ENCODE measurements at regions of chr1 and their contacts with region 1.

Region 1: DNA sequence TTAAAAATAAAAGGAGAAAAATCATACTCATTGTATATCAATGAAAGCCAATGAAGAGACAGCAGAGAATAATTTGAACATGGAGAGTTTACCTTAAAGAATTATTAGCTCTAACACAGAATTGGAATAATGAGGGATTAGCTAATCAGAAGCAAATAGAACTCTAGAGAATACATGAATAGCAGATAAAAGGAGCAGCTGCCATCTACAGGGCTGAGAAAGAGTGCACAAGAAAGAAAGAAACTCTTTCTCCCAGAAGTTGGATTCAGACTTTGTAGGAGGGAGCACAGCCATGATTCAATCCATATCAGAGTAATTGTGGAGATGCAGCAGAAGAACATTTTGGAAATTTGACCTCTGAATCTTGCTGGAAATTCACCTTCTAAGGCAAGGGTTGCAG is 1171.2 kb downstream of the PLA2G4A start:
- DNase-seq: no peak
- ATAC-seq: no peak
- H3K4me3 ChIP-seq: no peak overlapping the region
- H3K27ac ChIP-seq: no peak overlapping the region
- H3K4me1 ChIP-seq: no peaks in the 10 kb centered on the region
- H3K27me3 ChIP-seq: no peaks in the 10 kb centered on the region
- CTCF ChIP-seq: peak in 4 of 12 donors; percentile 22 to 39 (median 24)
- POLR2A ChIP-seq: no peak

Region 2: DNA sequence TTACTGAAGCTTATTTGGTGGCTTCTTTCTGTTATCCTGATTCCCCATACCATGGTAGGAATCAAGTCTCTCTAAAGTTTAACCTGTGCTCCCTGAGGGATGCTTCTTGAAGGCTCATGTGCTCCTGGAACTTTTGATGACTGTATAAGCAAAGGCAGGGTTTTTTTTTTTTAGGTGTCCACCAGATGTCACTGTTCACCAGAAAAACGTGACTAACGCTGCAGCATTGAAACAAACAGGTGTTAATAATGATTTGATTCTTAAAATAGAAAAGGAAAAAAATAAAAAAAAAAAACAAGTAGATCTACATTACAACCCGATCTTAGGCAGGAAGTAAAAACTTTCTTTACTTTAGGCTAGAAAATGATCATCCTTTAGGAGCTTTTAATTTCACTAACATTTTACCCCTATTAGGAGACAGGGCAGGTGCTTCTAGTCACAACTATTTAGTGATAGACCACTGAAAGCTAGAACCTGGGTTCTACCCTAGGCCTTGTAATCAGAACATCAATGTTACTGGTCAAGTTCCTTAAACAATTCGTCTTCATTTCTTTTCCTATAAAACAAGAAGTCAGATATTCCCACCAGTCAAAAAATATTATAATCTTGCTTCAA is 948.2 kb before region 1 on chr1:
- intact Hi-C with region 1: loop called in 1 of 10 experiments (anchors 5 kb)
- DNase-seq: no peak
- ATAC-seq: no peak
- H3K4me3 ChIP-seq: no peak overlapping the region
- H3K27ac ChIP-seq: no peak overlapping the region
- H3K4me1 ChIP-seq: peaks cover 0 to 5% (median 0%) of the 10 kb centered on the region in 12 donors
- H3K27me3 ChIP-seq: peaks cover 0 to 4% (median 0%) of the 10 kb centered on the region in 9 donors
- CTCF ChIP-seq: peak; percentile 27 to 61 (median 37)
- POLR2A ChIP-seq: no peak

Region 3: GRCh38 chr1:187078321-187078720 is 921.7 kb before region 1 on chr1:
- intact Hi-C with region 1: no loop called
- DNase-seq: no peak
- ATAC-seq: no peak
- H3K4me3 ChIP-seq: no peak overlapping the region
- H3K27ac ChIP-seq: no peak overlapping the region
- H3K4me1 ChIP-seq: no peaks in the 10 kb centered on the region
- H3K27me3 ChIP-seq: no peaks in the 10 kb centered on the region
- CTCF ChIP-seq: no peak
- POLR2A ChIP-seq: no peak

Region 4: DNA sequence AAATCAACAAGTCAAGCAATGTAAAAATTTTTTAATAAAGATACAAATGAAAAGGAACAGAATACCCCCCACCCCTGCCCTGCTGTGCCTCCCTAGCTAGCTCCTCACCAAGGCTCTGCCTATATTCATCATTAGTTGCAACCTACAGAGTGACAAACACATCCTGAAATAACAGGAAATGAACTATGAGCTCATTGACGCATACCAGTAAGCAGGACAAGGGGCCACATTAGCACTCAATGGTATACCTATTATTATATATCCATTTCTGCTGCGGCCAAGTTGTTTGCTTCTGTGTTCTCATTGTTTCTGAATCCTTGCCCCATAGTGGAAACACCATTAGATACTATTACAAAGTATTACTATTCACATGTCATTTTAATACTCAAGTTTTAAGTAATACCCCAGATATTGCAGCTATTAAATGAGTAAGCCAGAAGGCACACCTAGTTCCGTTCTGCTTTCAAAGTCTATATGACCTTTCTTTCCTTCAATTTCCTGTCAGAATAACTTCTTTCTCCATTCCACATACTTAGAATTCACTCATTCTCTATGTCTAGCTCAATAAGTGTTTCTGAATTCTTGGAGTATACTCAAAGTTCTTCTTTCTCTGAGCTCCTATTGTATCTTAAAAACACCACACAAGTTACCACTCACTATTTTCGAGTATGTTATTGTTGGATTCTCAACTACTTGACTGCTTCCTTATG is 43.7 kb after region 1 on chr1:
- intact Hi-C with region 1: no loop called
- DNase-seq: no peak
- ATAC-seq: no peak
- H3K4me3 ChIP-seq: no peak overlapping the region
- H3K27ac ChIP-seq: no peak overlapping the region
- H3K4me1 ChIP-seq: no peaks in the 10 kb centered on the region
- H3K27me3 ChIP-seq: no peaks in the 10 kb centered on the region
- CTCF ChIP-seq: no peak
- POLR2A ChIP-seq: no peak

Measured in heart left ventricle (tissue), 16 donors.